ENCODE measurements at regions of chr7 and their contacts with region 1.

Region 1: GRCh38 chr7:4641667-4642467 is 40.2 kb upstream of the FOXK1 start:
- DNase-seq: peak; percentile 83
- H3K4me3 ChIP-seq: peak overlapping the region; percentile 77 to 93 (median 81)
- H3K27ac ChIP-seq: peak overlapping the region; percentile 48
- H3K4me1 ChIP-seq: peaks cover 6% of the 10 kb centered on the region
- H3K27me3 ChIP-seq: no peaks in the 10 kb centered on the region
- CTCF ChIP-seq: peak; percentile 27 to 49

Region 2: DNA sequence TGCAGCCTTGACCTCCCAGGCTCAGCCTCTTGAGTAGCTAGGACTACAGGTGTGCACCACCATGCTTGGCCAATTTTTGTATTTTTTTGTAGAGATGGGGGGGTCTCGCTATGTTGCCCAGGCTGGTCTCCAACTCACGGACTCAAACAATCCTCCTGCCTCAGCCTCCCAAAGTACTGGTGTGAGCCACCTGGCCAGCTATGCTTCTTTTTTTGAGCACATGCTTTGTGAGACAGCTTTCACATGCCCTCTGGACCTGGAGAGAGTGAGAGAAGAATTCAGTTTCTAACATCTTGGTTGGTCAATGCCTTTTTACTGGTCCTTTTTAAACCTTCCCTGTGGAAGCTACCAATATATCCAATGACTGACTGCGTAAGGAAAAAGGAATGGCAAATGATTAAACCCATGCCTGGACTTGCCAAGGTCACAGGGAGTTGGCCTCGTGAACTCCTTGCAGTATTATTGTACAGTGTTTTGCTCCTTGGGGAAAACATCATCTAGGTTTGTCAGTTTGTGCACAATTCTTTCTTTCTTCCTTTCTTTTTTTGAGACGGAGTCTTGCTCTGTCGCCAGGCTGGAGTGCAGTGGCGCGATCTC is 34.0 kb after region 1 on chr7:
- CTCF ChIA-PET with region 1: no interaction called
- dilution Hi-C with region 1: loop called (anchors 5 kb)
- in situ Hi-C with region 1: loop called in 1 of 2 experiments (anchors 5 kb)
- intact Hi-C with region 1: no loop called
- DNase-seq: no peak
- H3K4me3 ChIP-seq: no peak overlapping the region
- H3K27ac ChIP-seq: no peak overlapping the region
- H3K4me1 ChIP-seq: no peaks in the 10 kb centered on the region
- H3K27me3 ChIP-seq: no peaks in the 10 kb centered on the region
- CTCF ChIP-seq: no peak

Region 3: GRCh38 chr7:4744391-4745264 is 102.8 kb after region 1 on chr7:
- CTCF ChIA-PET with region 1: no interaction called
- dilution Hi-C with region 1: no loop called
- in situ Hi-C with region 1: no loop called
- intact Hi-C with region 1: loop called (anchors 1 kb)
- DNase-seq: peak; percentile 99
- H3K4me3 ChIP-seq: peak overlapping the region in 2 of 3 experiments; percentile 16
- H3K27ac ChIP-seq: peak overlapping the region; percentile 91
- H3K4me1 ChIP-seq: peaks cover 25% of the 10 kb centered on the region
- H3K27me3 ChIP-seq: no peaks in the 10 kb centered on the region
- CTCF ChIP-seq: peak in 1 of 2 donors; percentile 1

Region 4: DNA sequence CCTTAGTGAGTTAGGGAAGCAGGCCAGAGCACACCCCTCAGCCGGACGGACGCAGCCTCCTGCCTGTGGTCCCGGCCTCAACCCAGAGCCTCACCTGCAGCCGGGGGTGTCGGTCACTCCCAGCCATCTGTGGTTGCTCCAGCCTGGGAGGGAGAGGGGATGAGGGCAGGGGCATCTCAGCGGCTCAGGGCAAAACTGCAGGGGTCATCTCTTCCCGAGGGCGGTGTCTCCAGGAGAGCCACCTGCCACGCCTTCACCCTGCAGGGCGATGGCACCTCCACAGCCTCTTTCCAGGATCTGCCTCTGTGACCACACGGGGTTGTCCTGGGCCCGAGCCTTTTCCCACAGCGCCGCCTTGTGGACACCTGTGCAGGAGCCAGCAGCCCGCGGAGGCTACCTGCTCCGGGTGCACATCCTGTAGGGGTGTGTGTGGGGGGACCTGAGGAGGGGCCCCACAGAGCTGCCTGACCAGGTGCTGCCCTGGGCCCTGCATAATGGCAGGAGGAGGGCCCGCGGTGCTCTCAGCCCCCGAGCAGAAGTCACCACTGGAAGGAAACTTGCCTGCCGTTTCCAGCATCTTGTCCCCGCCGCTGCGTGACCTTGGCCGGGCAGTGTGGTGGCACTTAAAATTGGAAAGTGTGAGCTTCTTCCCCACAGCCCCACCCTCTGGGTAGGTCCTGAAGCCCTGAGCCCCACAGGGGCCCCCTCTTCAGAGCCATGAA is 112.0 kb after region 1 on chr7:
- CTCF ChIA-PET with region 1: no interaction called
- dilution Hi-C with region 1: no loop called
- in situ Hi-C with region 1: no loop called
- intact Hi-C with region 1: loop called (anchors 1 kb)
- DNase-seq: peak; percentile 59
- H3K4me3 ChIP-seq: no peak overlapping the region
- H3K27ac ChIP-seq: no peak overlapping the region
- H3K4me1 ChIP-seq: no peaks in the 10 kb centered on the region
- H3K27me3 ChIP-seq: no peaks in the 10 kb centered on the region
- CTCF ChIP-seq: peak; percentile 84 to 95